ENCODE measurements at regions of chr7 and their contacts with region 1.

Region 1: DNA sequence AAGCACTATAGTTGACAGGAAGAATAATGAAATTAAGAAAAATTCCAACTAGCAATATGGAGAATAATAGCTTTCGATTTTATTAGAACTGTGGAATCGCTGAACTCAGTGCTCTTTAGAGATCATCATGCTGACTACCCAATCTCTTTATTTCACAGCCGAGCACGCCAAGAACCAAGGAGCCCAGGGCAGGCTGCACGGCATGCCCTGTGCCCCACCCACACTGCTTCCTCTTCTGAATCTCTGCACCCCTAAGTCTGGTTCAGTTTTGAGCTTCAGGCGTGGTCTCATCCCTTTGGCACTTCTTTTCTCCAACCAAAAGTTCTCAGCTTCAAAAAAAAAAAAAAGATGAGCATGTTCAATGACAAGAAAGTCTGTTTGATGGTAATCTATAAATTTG is 92.4 kb upstream of the ZNF800 start:
- DNase-seq: no peak
- ATAC-seq: no peak
- H3K4me3 ChIP-seq: no peak overlapping the region
- H3K4me3 Mint-ChIP-seq: no peak overlapping the region
- H3K27ac ChIP-seq: no peak overlapping the region
- H3K27ac Mint-ChIP-seq: no peak overlapping the region
- H3K4me1 ChIP-seq: no peaks in the 10 kb centered on the region
- H3K4me1 Mint-ChIP-seq: no peaks in the 10 kb centered on the region
- H3K27me3 ChIP-seq: peaks cover 2% of the 10 kb centered on the region
- H3K27me3 Mint-ChIP-seq: peaks cover 21 to 61% of the 10 kb centered on the region in 2 donors
- CTCF ChIP-seq: no peak

Region 2: GRCh38 chr7:127447326-127447945 is 37.5 kb before region 1 on chr7:
- intact Hi-C with region 1: no loop called
- DNase-seq: peak; percentile 44 to 80
- ATAC-seq: peak; percentile 99 to 100 (median 100)
- H3K4me3 ChIP-seq: no peak overlapping the region
- H3K4me3 Mint-ChIP-seq: no peak overlapping the region
- H3K27ac ChIP-seq: no peak overlapping the region
- H3K27ac Mint-ChIP-seq: no peak overlapping the region
- H3K4me1 ChIP-seq: peaks cover 6% of the 10 kb centered on the region
- H3K4me1 Mint-ChIP-seq: peaks cover 0 to 5% of the 10 kb centered on the region in 2 donors
- H3K27me3 ChIP-seq: peaks cover 17% of the 10 kb centered on the region
- H3K27me3 Mint-ChIP-seq: peaks cover 38 to 51% of the 10 kb centered on the region in 2 donors
- CTCF ChIP-seq: peak; percentile 97

Region 3: DNA sequence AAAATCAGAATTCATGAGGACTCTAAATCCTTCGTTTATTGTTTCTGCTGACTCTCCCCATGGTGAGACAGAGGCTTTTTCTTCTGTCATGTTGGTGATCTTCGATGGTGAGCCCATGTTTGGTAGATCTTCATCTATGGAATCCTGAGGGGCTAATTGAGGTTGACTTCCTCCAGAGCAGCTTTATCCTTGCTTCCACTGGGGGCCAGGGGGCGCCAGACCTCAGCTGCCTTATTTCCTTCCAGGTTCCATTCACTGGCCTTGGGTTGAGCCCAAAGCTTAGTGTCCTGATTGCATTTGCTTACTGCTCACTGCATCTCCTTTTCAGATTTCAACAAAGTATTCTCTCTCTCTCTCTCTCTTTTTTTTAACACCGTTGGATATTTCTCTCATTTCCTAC is 19.8 kb after region 1 on chr7:
- intact Hi-C with region 1: no loop called
- DNase-seq: peak in 1 of 2 donors; percentile 33
- ATAC-seq: no peak
- H3K4me3 ChIP-seq: no peak overlapping the region
- H3K4me3 Mint-ChIP-seq: no peak overlapping the region
- H3K27ac ChIP-seq: no peak overlapping the region
- H3K27ac Mint-ChIP-seq: no peak overlapping the region
- H3K4me1 ChIP-seq: no peaks in the 10 kb centered on the region
- H3K4me1 Mint-ChIP-seq: no peaks in the 10 kb centered on the region
- H3K27me3 ChIP-seq: peaks cover 6% of the 10 kb centered on the region
- H3K27me3 Mint-ChIP-seq: peaks cover 27 to 71% of the 10 kb centered on the region in 2 donors
- CTCF ChIP-seq: peak; percentile 32

Region 4: DNA sequence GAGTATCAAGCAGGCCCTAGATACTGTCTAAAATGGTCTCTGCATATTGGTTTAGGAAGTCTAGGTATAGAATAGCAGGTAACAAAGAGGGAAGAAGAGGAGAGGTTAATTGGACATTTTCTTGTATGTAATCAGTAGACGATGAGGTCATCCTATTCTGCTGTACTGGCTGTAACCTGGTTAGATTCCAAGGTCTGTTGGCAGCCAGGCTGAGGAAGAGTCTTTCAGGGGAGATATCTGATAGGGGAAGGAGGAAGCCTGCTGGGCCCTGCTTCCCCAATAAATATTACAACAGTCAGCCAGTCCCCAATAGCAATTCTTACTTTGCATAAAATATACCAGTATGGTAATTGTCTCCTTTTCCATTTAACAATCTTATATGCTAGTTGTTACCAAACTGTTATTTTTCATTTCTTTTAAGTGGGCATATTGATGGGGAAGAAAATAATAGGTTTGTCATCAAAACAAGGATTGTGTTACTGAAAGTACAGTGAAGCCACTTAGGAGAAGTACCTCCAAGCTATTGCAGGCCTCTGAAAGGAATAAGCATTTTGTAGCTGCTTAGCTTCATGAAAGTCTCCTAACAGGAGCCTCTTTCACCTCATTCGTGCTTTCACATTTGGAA is 359.9 kb after region 1 on chr7:
- intact Hi-C with region 1: loop called (anchors 5 kb)
- DNase-seq: no peak
- ATAC-seq: no peak
- H3K4me3 ChIP-seq: no peak overlapping the region
- H3K4me3 Mint-ChIP-seq: no peak overlapping the region
- H3K27ac ChIP-seq: no peak overlapping the region
- H3K27ac Mint-ChIP-seq: no peak overlapping the region
- H3K4me1 ChIP-seq: no peaks in the 10 kb centered on the region
- H3K4me1 Mint-ChIP-seq: peaks cover 21 to 43% of the 10 kb centered on the region in 2 donors
- H3K27me3 ChIP-seq: no peaks in the 10 kb centered on the region
- H3K27me3 Mint-ChIP-seq: no peaks in the 10 kb centered on the region
- CTCF ChIP-seq: no peak